ENCODE measurements at regions of chr17 and their contacts with region 1.

Region 1: GRCh38 chr17:40177275-40177874 is at the start of gene RAPGEFL1:
- DNase-seq: peak; percentile 100
- H3K4me3 Mint-ChIP-seq: peak within 1 kb of the TSS; percentile 76
- H3K27ac Mint-ChIP-seq: peak within 1 kb of the TSS; percentile 61
- H3K4me1 Mint-ChIP-seq: peaks cover 51% of the 10 kb centered on the region
- H3K27me3 Mint-ChIP-seq: no peaks in the 10 kb centered on the region
- CTCF ChIP-seq: no peak
- total RNA-seq, gene RAPGEFL1: 57.9 and 86.3 TPM in 2 replicates

Region 2: DNA sequence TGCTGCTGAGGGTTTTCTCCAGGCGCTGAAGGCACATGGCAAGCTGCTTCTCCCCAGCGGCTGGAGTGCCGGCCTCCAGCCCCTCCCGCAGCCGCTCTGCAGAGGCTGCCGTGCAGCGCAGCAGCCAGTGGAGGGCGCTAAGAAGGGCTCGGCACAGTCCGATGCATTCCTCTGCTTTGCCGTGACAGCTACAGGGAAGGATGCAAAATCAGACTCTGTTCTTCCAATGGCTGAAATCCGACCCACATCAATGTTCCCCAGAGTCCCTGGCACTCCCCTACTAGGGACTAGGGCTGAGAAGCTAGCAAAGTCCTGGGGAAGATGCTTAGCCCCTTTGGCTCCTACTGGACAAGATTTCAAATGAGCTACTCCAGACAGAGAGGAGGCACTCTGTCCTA is 142.2 kb before region 1 on chr17:
- CTCF ChIA-PET with region 1: no interaction called
- intact Hi-C with region 1: no loop called
- DNase-seq: peak; percentile 74
- H3K4me3 Mint-ChIP-seq: no peak overlapping the region
- H3K27ac Mint-ChIP-seq: no peak overlapping the region
- H3K4me1 Mint-ChIP-seq: peaks cover 8% of the 10 kb centered on the region
- H3K27me3 Mint-ChIP-seq: no peaks in the 10 kb centered on the region
- CTCF ChIP-seq: no peak

Region 3: DNA sequence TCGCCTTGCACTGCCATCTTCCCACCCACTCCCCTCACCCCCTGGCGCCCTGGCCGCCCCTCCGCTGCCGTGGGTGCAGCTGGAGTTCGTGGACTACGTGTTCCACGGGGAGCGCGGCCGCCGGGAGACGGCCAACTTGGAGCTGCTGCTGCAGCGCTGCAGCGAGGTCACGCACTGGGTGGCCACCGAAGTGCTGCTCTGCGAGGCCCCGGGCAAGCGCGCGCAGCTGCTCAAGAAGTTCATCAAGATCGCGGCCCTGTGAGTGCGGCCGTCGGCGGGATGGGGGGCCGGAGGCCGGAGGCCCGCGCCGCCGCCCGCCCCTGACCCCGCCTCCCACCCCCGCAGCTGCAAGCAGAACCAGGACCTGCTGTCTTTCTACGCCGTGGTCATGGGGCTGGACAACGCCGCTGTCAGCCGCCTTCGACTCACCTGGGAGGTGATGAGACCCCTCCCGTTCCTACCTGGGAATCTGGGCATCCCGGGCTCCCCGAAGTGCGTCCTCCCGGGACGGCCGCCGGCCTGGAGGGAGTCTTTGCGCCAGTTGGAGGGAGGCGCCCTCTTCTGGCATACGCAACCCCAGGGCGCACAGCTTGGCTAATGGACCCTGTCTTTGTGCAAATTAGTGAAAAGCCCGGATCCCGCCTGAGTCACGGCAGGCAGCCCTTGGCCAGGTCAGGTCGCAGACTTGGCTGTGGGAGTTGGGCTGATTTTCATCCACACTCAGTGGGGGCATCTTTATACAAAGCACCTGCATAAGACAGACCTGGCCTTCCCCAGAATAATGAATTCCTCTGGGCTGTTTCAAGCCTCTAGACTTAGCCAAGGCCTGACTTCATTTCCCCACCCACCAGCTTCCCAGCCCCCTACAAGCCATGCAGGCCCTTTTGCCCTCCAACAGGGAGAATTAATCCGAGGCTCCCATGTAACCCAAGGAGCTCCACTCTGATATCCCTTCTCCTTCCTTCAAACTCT is 14.1 kb after region 1 on chr17:
- CTCF ChIA-PET with region 1: interaction called, 145 read pairs
- intact Hi-C with region 1: no loop called
- DNase-seq: no peak
- H3K4me3 Mint-ChIP-seq: no peak overlapping the region
- H3K27ac Mint-ChIP-seq: no peak overlapping the region
- H3K4me1 Mint-ChIP-seq: no peaks in the 10 kb centered on the region
- H3K27me3 Mint-ChIP-seq: no peaks in the 10 kb centered on the region
- CTCF ChIP-seq: no peak

Region 4: GRCh38 chr17:40791787-40792436 is 614.5 kb after region 1 on chr17:
- CTCF ChIA-PET with region 1: no interaction called
- intact Hi-C with region 1: no loop called
- DNase-seq: peak; percentile 59
- H3K4me3 Mint-ChIP-seq: no peak overlapping the region
- H3K27ac Mint-ChIP-seq: no peak overlapping the region
- H3K4me1 Mint-ChIP-seq: no peaks in the 10 kb centered on the region
- H3K27me3 Mint-ChIP-seq: peaks cover 40% of the 10 kb centered on the region
- CTCF ChIP-seq: peak; percentile 100

Region 5: DNA sequence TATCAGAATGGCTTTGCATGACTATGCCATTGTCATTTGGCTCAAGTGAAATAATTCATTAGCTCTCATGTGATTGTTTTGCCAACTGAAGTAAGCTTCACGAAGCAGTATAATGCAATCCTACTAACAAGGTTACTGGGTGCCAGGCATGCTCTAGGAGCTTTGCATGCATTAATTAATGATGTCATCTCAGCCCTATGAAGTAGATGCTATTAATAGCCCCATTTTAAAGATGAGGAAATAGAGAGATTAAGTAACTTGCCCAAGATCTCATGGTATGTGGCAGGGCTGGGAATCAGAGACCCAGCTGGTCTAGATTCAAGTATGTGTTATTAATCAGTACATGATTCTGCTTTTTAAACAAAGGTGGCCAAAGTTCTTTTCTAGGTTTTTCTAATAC is 775.3 kb after region 1 on chr17:
- CTCF ChIA-PET with region 1: no interaction called
- intact Hi-C with region 1: no loop called
- DNase-seq: peak; percentile 79
- H3K4me3 Mint-ChIP-seq: peak overlapping the region; percentile 49
- H3K27ac Mint-ChIP-seq: peak overlapping the region; percentile 94
- H3K4me1 Mint-ChIP-seq: peaks cover 93% of the 10 kb centered on the region
- H3K27me3 Mint-ChIP-seq: no peaks in the 10 kb centered on the region
- CTCF ChIP-seq: no peak

Region 6: GRCh38 chr17:40980596-40980995 is 803.2 kb after region 1 on chr17:
- CTCF ChIA-PET with region 1: no interaction called
- intact Hi-C with region 1: no loop called
- DNase-seq: no peak
- H3K4me3 Mint-ChIP-seq: no peak overlapping the region
- H3K27ac Mint-ChIP-seq: no peak overlapping the region
- H3K4me1 Mint-ChIP-seq: peaks cover 11% of the 10 kb centered on the region
- H3K27me3 Mint-ChIP-seq: no peaks in the 10 kb centered on the region
- CTCF ChIP-seq: no peak